ENCODE measurements at regions of chr17 and their contacts with region 1.

Region 1: DNA sequence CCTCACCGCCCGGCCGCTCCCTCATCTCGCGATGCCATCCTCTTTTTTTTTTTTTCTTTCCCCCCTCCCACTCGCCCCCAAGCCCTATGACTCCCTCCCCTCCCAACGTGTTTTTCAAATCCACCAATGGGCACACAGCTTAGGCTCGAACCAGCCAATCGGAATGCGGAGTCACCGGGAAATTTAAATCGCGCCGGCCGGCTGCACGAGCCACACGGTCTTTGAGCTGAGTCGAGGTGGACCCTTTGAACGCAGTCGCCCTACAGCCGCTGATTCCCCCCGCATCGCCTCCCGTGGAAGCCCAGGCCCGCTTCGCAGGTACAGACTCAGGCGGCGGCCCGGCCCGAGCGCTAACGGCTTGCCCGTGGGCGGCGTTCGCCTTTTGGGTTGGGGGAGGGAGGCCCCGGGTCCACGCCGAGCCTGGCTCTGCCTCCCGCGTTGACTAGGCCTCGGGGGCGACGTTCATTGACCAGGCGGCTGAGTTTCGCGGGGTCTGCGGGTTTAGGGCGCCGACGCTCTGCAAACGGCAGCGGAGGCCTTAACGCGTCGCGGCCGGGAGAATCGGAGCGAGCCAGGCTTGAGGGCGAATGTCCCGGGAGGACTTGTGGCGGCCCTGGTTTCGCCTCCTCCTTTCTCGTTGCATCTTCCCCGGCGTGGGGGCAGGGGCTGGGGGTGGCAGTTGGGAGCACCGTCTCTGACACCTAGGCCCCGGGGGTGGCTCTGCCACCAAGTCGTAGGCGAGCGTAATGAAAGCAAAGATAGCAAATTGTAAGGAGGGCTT is at the start of gene KPNA2:
- DNase-seq: peak; percentile 92 to 93
- H3K4me3 ChIP-seq: peak within 1 kb of the TSS; percentile 78
- H3K27ac ChIP-seq: peak within 1 kb of the TSS; percentile 52
- H3K4me1 ChIP-seq: peaks cover 26% of the 10 kb centered on the region
- H3K27me3 ChIP-seq: no peaks in the 10 kb centered on the region
- CTCF ChIP-seq: no peak
- total RNA-seq, gene KPNA2: 175 and 201 TPM in 2 replicates

Region 2: GRCh38 chr17:67931233-67931632 is 104.5 kb before region 1 on chr17:
- CTCF ChIA-PET with region 1: no interaction called
- POLR2A ChIA-PET with region 1: no interaction called
- intact Hi-C with region 1: no loop called
- DNase-seq: no peak
- H3K4me3 ChIP-seq: no peak overlapping the region
- H3K27ac ChIP-seq: no peak overlapping the region
- H3K4me1 ChIP-seq: no peaks in the 10 kb centered on the region
- H3K27me3 ChIP-seq: no peaks in the 10 kb centered on the region
- CTCF ChIP-seq: no peak

Region 3: DNA sequence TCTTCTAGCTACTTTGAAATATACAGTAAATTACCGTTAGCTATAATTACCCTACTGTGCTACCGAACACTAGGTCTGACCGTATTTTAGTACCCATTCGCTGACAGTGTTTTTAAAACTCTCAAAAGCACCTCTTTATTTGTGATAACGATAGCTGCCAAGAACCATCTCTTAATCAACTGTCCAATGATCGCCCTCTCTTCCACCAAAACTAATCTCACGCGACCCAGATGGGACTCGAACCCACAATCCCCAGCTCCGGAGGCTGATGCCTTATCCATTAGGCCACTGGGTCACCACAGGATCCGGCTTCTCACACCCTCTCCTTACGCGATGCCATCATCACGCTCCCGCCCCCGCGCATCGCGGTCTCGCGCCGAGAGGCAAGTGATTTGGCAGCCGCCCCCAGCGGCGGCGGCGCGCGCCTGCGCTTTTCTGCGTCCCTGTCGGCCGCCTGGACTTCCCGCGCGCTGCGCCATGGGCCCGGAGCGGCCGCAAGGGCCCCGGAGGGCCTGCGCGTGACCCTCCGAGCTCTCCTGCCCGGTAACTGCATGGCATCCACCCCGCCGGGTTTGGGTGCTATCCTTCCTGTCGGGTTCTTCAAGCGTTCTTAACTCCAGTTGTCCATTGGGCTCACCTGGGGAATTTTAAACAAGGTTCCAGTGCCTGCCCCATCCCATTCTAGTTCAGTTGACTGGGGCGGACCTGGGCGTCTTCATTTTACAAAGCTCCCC is 15.9 kb before region 1 on chr17:
- CTCF ChIA-PET with region 1: no interaction called
- POLR2A ChIA-PET with region 1: no interaction called
- intact Hi-C with region 1: loop called (anchors 1 kb)
- DNase-seq: peak; percentile 90 to 98
- H3K4me3 ChIP-seq: peak overlapping the region; percentile 71
- H3K27ac ChIP-seq: 0 out of 2 replicates have a peak overlapping the region, but pooled peaks have one; percentile 14
- H3K4me1 ChIP-seq: peaks cover 13% of the 10 kb centered on the region
- H3K27me3 ChIP-seq: no peaks in the 10 kb centered on the region
- CTCF ChIP-seq: peak; percentile 47; the same call in 1 of the 2 replicates

Measured in PC-9 (cell line).